IMR-90 (cell line): ENCODE measurements at regions of chr9 and their contacts with region 1.

Region 1: GRCh38 chr9:107425101-107426045 is 64.2 kb downstream of the KLF4 start:
- DNase-seq: peak; percentile 19
- ATAC-seq: peak; percentile 87
- H3K4me3 ChIP-seq: no peak overlapping the region
- H3K27ac ChIP-seq: no peak overlapping the region
- H3K4me1 ChIP-seq: no peaks in the 10 kb centered on the region
- H3K27me3 ChIP-seq: peaks cover 1% of the 10 kb centered on the region; the same call in 1 of the 2 replicates
- CTCF ChIP-seq: peak; percentile 60
- POLR2A ChIP-seq: no peak
- RAD21 ChIP-seq: peak; percentile 40

Region 2: DNA sequence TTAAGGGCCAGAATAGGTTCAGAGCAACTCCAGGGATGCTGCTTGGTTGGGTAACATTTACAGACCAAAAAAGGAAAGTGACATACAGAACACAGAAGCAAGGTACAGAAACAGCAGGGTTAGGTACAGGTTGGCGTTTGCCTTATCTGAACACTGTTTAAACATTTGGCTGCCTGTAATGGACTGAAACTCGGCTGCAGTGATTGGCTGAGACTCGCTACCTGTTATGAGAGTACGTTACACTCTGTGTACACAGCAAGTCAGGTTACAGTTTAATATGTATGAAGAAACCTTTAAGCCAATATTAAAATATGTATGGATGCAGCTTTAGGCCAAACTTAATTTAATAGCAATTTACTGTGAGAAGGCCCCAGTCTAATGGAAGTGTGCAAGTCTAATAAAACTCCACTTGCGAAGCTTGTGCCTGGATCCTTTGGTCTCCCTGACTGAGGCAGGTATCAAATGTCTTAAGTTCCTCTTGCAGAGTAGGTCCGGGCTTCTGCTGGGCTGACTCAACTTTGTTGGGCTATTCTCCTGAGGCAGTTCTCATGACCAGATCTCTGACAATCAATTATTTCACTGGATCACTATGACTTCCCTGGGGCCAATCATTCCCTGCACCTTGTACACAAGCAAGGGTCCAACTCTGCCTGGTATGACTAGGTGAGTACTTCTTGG is 357.5 kb before region 1 on chr9:
- CTCF ChIA-PET with region 1: no interaction called
- POLR2A ChIA-PET with region 1: no interaction called
- dilution Hi-C with region 1: no loop called
- in situ Hi-C with region 1: no loop called
- intact Hi-C with region 1: no loop called
- DNase-seq: no peak
- ATAC-seq: no peak
- H3K4me3 ChIP-seq: no peak overlapping the region
- H3K27ac ChIP-seq: no peak overlapping the region
- H3K4me1 ChIP-seq: no peaks in the 10 kb centered on the region
- H3K27me3 ChIP-seq: 0 out of 2 replicates have a peak, but pooled peaks cover 2% of the 10 kb centered on the region
- CTCF ChIP-seq: no peak
- POLR2A ChIP-seq: no peak
- RAD21 ChIP-seq: no peak

Region 3: GRCh38 chr9:107190061-107190935 is 235.1 kb before region 1 on chr9:
- CTCF ChIA-PET with region 1: no interaction called
- POLR2A ChIA-PET with region 1: no interaction called
- dilution Hi-C with region 1: no loop called
- in situ Hi-C with region 1: no loop called
- intact Hi-C with region 1: no loop called
- DNase-seq: peak; percentile 80
- ATAC-seq: peak; percentile 83
- H3K4me3 ChIP-seq: no peak overlapping the region
- H3K27ac ChIP-seq: no peak overlapping the region
- H3K4me1 ChIP-seq: peaks cover 5% of the 10 kb centered on the region
- H3K27me3 ChIP-seq: peaks cover 2% of the 10 kb centered on the region; the same call in 1 of the 2 replicates
- CTCF ChIP-seq: no peak
- POLR2A ChIP-seq: no peak
- RAD21 ChIP-seq: no peak

Region 4: GRCh38 chr9:107438211-107439090 is 13.1 kb after region 1 on chr9:
- CTCF ChIA-PET with region 1: interaction called, 11 read pairs
- POLR2A ChIA-PET with region 1: no interaction called
- dilution Hi-C with region 1: no loop called
- in situ Hi-C with region 1: no loop called
- intact Hi-C with region 1: no loop called
- DNase-seq: no peak
- ATAC-seq: peak; percentile 78
- H3K4me3 ChIP-seq: no peak overlapping the region
- H3K27ac ChIP-seq: no peak overlapping the region
- H3K4me1 ChIP-seq: peaks cover 3% of the 10 kb centered on the region; the same call in 1 of the 2 replicates
- H3K27me3 ChIP-seq: peaks cover 2% of the 10 kb centered on the region
- CTCF ChIP-seq: no peak
- POLR2A ChIP-seq: no peak
- RAD21 ChIP-seq: no peak

Region 5: GRCh38 chr9:107739601-107740082 is 314.3 kb after region 1 on chr9:
- CTCF ChIA-PET with region 1: no interaction called
- POLR2A ChIA-PET with region 1: no interaction called
- dilution Hi-C with region 1: no loop called
- in situ Hi-C with region 1: no loop called
- intact Hi-C with region 1: no loop called
- DNase-seq: peak; percentile 15
- ATAC-seq: no peak
- H3K4me3 ChIP-seq: no peak overlapping the region
- H3K27ac ChIP-seq: peak overlapping the region; percentile 15; the same call in 1 of the 2 replicates
- H3K4me1 ChIP-seq: peaks cover 31% of the 10 kb centered on the region
- H3K27me3 ChIP-seq: no peaks in the 10 kb centered on the region
- CTCF ChIP-seq: no peak
- POLR2A ChIP-seq: no peak
- RAD21 ChIP-seq: no peak